ENCODE measurements at regions of chr1 and their contacts with region 1.

Region 1: DNA sequence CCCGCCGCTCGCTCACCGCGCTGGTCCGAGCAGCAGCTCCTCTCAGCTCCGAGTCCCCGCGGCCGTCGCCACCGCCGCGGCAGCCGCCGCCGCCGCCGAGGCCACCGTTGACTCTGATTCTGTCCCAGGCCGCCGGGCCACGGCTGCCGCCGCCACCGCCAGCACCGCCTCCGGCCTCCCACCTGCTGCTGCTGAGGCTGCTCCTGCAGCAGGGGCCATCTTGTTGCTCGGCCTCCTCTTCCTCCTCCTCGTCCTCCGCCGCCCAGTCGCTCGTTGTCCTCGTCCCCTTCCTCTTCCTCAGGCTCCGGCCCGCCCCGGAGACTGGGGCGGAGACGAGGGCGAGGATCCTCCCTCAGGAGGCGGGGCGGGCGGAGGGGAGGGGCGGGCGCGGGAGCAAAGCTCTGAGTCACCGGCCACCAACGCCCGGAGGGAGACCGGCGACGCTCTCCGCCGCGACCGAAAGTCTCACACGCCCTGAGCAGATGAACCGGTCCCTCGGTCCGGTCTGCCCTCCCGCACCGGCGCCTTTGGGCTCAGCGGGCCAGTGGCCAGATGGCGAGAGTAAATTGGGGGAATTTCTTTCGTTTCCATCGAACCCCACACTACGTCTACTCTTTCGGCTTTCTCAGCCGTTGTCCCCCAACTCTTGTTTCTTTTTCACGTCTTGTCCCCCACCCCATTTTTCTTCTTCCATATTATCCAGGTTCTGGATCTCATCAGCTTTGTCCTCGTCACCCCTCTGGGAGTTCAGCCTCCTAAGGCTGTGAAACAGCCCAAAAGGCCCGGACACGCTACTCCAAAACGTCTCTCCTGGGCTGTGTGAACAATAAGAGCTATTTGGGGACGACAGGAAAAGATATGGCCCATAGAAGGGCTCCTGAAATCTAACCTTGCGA is at the start of gene RC3H1:
- DNase-seq: peak; percentile 37
- H3K4me3 ChIP-seq: peak within 1 kb of the TSS; percentile 79
- H3K27me3 ChIP-seq: no peaks in the 10 kb centered on the region
- CTCF ChIP-seq: no peak
- polyA plus RNA-seq, gene RC3H1: 10.6 and 14.1 TPM in 2 replicates

Region 2: DNA sequence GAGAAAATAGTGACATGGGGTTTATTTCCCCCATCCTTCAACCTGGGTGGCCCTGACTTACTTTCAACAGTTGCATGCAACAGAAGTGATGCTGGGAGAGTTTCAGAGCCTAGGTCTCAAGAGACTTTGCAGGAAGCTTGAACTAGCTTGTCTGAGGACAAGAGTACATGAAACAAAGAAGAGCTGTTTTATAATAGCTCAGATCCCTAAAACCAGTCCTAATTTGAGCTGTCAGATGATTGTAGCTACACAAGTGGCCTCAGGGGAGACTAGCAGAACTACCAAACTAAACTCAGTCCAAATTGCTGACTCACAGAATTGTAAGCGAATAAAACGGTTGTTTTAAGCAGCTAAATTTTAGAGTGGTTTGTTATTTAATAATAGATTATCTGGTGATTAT is 17.3 kb before region 1 on chr1:
- CTCF ChIA-PET with region 1: no interaction called
- POLR2A ChIA-PET with region 1: interaction called, 13 read pairs
- DNase-seq: no peak
- H3K4me3 ChIP-seq: no peak overlapping the region
- H3K27me3 ChIP-seq: no peaks in the 10 kb centered on the region
- CTCF ChIP-seq: no peak

Region 3: GRCh38 chr1:174032671-174033222 is 10.4 kb after region 1 on chr1:
- CTCF ChIA-PET with region 1: no interaction called
- POLR2A ChIA-PET with region 1: no interaction called
- DNase-seq: no peak
- H3K4me3 ChIP-seq: no peak overlapping the region
- H3K27me3 ChIP-seq: no peaks in the 10 kb centered on the region
- CTCF ChIP-seq: no peak

Measured in BJ (cell line).